ENCODE measurements at regions of chr12 and their contacts with region 1.

Region 1: GRCh38 chr12:121803631-121804416 is at the start of gene SETD1B:
- DNase-seq: no peak
- ATAC-seq: peak; percentile 26
- H3K4me3 ChIP-seq: peak within 1 kb of the TSS; percentile 55 to 72
- H3K27ac ChIP-seq: peak within 1 kb of the TSS; percentile 98
- H3K4me1 ChIP-seq: peaks cover 19% of the 10 kb centered on the region
- H3K27me3 ChIP-seq: no peaks in the 10 kb centered on the region
- CTCF ChIP-seq: no peak
- total RNA-seq, gene SETD1B: 31.2 TPM

Region 2: DNA sequence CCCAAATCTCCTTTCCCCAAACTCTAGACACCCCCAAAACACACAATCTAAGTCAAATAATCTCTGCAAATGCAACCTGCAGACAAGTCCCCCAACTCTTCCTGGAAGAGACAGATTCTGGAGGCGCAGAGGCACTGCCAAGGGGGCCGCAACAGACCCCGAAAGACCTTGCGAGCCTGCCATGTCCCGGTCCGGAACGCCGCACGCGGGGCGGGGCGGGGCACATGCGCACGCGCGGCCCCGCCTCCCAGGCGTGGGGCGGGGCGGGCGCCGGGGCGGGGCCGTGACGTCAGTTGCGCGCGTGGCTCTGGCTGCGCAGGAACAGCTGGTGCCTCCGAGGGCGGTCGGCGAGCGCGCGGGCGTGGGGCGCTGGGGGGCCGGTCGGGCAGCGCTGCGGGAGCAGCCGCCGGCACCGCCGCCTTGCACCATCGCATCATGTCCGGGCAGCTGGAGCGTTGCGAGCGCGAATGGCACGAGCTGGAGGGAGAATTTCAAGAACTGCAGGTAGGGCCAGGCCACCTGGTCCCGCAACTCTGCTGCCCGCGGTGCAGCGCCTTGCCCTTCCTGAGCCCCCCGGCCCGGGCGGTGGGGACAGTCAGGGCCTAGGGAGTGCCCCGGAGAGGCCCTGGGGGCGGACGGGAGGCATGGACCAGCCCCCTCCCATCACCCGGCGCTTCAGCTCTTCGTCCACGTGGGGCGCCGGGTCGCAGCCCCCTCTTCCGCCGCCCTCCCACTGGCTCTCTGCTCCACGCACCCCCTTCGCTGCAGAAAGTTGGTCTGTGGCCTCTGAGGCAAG is 91.2 kb before region 1 on chr12 and contains the start of gene TMEM120B:
- CTCF ChIA-PET with region 1: no interaction called
- POLR2A ChIA-PET with region 1: no interaction called
- in situ Hi-C with region 1: no loop called
- intact Hi-C with region 1: no loop called
- DNase-seq: no peak
- ATAC-seq: peak; percentile 96
- H3K4me3 ChIP-seq: peak within 1 kb of the TSS; percentile 75 to 88
- H3K27ac ChIP-seq: peak within 1 kb of the TSS; percentile 88
- H3K4me1 ChIP-seq: peaks cover 17% of the 10 kb centered on the region
- H3K27me3 ChIP-seq: no peaks in the 10 kb centered on the region
- CTCF ChIP-seq: no peak
- total RNA-seq, gene TMEM120B: 22.3 TPM

Region 3: DNA sequence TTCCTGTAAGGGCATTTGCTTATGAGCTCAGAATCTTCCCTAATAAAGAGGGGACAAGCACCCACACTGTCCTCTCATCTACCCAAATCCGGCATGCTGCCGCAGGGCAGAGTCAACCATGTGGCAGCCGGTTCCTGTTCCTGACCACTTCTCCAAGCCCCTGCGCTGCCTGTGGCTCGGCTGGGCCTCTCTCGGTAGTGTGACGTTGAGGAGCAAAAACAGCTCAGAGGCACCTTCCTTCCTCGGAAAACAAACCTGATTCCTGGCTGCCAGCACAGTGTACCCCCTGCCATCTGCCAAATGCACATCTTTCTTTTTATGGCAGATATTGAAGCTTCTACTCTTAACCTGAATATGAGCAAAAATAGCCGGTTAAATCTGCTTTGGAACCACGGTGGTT is 165.1 kb after region 1 on chr12:
- CTCF ChIA-PET with region 1: no interaction called
- POLR2A ChIA-PET with region 1: no interaction called
- in situ Hi-C with region 1: no loop called
- intact Hi-C with region 1: no loop called
- DNase-seq: no peak
- ATAC-seq: no peak
- H3K4me3 ChIP-seq: no peak overlapping the region
- H3K27ac ChIP-seq: no peak overlapping the region
- H3K4me1 ChIP-seq: no peaks in the 10 kb centered on the region
- H3K27me3 ChIP-seq: no peaks in the 10 kb centered on the region
- CTCF ChIP-seq: no peak

Region 4: GRCh38 chr12:122158700-122159285 is 355.0 kb after region 1 on chr12:
- CTCF ChIA-PET with region 1: no interaction called
- POLR2A ChIA-PET with region 1: interaction called, 10 read pairs
- in situ Hi-C with region 1: no loop called
- intact Hi-C with region 1: no loop called
- DNase-seq: no peak
- ATAC-seq: no peak
- H3K4me3 ChIP-seq: no peak overlapping the region
- H3K27ac ChIP-seq: no peak overlapping the region
- H3K4me1 ChIP-seq: no peaks in the 10 kb centered on the region
- H3K27me3 ChIP-seq: no peaks in the 10 kb centered on the region
- CTCF ChIP-seq: no peak